Naive thymus-derived CD8-positive, alpha-beta T cell (primary cell): ENCODE measurements at regions of chr11 and their contacts with region 1.

Region 1: DNA sequence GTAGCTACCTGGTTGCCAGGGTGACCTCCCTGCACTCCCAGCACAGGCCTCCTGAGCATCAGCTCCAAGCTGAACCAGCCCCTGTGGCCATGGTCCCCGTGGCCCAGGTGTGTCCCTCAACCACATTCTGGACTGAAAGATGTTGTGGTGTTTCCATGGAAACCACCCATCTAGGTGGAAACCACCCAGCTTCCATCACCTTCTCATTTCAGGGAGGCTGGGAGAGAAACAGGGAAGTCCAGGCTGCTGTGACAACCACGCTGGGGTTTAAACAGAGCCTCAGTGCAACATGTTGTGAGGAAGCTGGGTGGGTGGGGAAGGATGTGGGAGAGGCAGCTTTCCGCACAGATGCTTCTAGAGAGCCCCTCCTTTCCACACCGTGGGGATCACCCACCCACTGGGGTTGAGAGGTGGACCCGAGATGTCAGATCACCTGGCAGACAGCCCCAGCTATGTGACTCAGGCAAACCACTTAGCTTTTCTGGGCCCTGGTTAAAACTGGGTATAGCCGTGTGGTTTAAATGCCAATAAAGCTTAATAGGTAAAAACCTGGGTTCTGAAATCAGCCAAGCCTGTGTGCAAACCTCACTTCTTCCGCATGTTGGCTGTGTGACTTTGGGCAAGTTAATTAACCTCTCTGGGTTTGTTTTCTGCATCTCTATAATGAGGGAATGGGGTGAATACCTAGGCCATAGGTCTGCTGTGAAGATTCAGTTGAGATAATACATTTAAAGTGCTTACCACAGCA is 46.4 kb downstream of the CD82 start:
- DNase-seq: peak in 9 of 10 donors; percentile 25 to 88 (median 56)
- ATAC-seq: peak; percentile 85 to 86
- H3K4me3 Mint-ChIP-seq: peak overlapping the region; percentile 24 to 61 (median 48)
- H3K27ac Mint-ChIP-seq: peak overlapping the region; percentile 34 to 91 (median 86)
- H3K4me1 Mint-ChIP-seq: peaks cover 39 to 87% (median 75%) of the 10 kb centered on the region in 4 donors
- H3K27me3 Mint-ChIP-seq: no peaks in the 10 kb centered on the region

Region 2: DNA sequence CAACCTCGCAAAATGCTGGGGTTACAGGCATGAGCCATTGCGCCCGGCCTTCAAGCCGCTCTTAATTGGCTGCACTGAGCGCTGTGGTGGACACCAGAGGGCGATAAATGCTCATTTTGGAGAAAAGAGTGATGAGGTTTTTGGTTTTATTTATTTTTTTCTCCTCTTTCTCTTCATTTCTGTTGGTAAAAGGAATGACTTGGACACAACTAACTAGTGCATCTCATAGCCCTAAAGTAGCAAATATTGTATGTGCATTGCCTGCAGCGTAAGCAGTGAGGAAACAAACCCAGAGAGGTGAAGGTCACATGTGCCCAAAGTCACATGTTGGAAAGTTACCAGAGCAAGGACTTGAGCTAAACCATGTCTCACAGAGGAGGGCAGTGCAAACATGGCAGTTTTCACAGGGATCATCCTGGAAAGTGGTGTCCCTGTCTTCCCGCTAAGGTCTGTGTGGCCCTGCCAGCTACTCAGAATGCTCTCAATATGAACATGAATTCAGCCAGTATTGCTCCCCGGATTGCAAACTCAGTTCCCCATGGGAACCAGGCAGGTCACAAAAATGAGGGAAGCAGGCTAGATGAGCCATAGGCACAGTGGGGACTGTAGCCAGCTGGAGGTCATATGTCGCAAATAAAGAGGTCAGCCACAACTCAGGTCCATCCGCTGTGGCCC is 55.0 kb before region 1 on chr11:
- POLR2A ChIA-PET with region 1: interaction called, 32 read pairs
- DNase-seq: peak; percentile 38 to 82 (median 61)
- ATAC-seq: peak; percentile 70 to 79
- H3K4me3 Mint-ChIP-seq: no peak overlapping the region
- H3K27ac Mint-ChIP-seq: peak overlapping the region in 6 of 10 donors; percentile 19 to 80 (median 70)
- H3K4me1 Mint-ChIP-seq: peaks cover 9 to 41% (median 19%) of the 10 kb centered on the region in 4 donors
- H3K27me3 Mint-ChIP-seq: peaks cover 0 to under 1% (median 0%) of the 10 kb centered on the region in 5 donors

Region 3: DNA sequence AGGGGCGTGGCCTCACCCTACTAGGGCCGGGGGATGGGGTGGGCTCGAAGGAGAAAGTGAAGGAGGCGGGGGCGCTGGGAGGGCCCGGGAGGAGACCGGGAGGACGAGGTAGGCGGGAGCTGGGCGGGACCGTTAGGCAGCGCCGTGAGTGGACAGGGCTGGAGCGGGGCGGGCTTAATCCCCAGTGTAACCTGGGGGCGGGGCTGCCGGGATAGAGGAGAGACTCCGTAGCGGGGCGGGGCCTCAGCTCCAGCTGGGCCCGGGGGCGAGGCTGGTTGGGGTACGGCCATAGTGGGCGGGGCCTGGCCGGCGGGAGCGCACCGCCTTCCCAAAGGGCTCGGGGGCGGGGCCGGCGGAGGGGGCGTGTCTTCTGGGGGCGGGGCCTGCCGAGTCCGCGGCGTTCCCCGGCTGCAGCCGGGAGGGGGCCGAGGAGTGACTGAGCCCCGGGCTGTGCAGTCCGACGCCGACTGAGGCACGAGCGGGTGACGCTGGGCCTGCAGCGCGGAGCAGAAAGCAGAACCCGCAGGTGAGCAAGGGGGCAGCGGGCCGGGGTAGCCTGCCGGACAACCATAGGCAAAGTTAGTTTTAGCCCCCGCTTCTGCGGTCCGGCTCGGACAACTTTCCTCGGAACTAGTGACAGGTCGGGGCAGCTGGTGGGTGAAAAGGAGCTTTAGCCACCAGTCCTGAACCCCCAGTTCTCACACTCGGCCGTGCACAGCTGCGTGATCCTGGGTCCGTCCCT is 46.5 kb before region 1 on chr11 and contains the start of gene CD82:
- POLR2A ChIA-PET with region 1: interaction called, 68 read pairs
- DNase-seq: peak; percentile 86 to 97 (median 92)
- ATAC-seq: peak; percentile 79 to 80
- H3K4me3 Mint-ChIP-seq: peak within 1 kb of the TSS; percentile 78 to 91 (median 87)
- H3K27ac Mint-ChIP-seq: peak within 1 kb of the TSS; percentile 80 to 91 (median 85)
- H3K4me1 Mint-ChIP-seq: peaks cover 25 to 68% (median 55%) of the 10 kb centered on the region in 4 donors
- H3K27me3 Mint-ChIP-seq: no peaks in the 10 kb centered on the region
- polyA plus RNA-seq, gene CD82: 21.1 to 29.9 (median 21.1) TPM

Region 4: GRCh38 chr11:44570411-44571155 is 41.3 kb before region 1 on chr11:
- POLR2A ChIA-PET with region 1: interaction called, 68 read pairs
- DNase-seq: peak in 1 of 10 donors; percentile 43
- ATAC-seq: no peak
- H3K4me3 Mint-ChIP-seq: peak overlapping the region in 4 of 10 donors; percentile 60 to 71 (median 64)
- H3K27ac Mint-ChIP-seq: peak overlapping the region in 5 of 10 donors; percentile 5 to 90 (median 48)
- H3K4me1 Mint-ChIP-seq: peaks cover 51 to 97% (median 91%) of the 10 kb centered on the region in 4 donors
- H3K27me3 Mint-ChIP-seq: no peaks in the 10 kb centered on the region

Region 5: GRCh38 chr11:44596525-44597276 is 15.2 kb before region 1 on chr11:
- POLR2A ChIA-PET with region 1: interaction called, 70 read pairs
- DNase-seq: peak; percentile 34 to 79 (median 56)
- ATAC-seq: peak; percentile 89 to 91
- H3K4me3 Mint-ChIP-seq: peak overlapping the region; percentile 48 to 83 (median 70)
- H3K27ac Mint-ChIP-seq: peak overlapping the region; percentile 89 to 96 (median 92)
- H3K4me1 Mint-ChIP-seq: peaks cover 20 to 55% (median 41%) of the 10 kb centered on the region in 4 donors
- H3K27me3 Mint-ChIP-seq: no peaks in the 10 kb centered on the region

Region 6: DNA sequence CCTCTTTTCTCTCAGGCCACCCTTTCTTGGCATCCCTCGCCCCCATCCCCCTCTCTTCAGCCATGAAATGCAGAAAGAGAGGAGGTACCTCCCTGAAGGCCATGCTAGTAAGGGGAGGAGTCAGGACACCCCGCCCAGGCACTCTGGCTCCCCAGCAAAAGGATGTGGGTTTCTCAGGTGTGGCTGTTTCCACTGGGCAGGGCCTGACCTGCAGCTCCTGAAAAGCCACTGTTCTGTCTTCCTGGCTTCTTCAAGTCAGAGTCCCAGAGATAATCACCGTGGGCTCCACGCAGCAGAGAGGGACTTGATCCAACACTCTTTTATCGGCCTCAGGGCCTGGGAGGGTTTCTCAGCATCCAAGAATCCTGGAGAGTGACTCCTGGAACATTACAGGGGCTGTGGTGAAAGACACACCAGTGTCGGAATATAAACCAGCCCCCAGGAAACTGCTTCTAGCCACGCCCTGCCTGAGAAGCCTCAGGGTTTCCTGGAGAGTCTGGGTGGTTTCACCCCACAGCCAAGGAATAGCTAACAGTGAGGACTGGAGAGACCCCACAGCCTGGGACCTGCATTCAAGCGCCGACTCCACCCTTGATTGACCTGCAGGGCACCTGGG is 69.2 kb after region 1 on chr11:
- POLR2A ChIA-PET with region 1: interaction called, 10 read pairs
- DNase-seq: peak in 7 of 10 donors; percentile 8 to 48 (median 14)
- ATAC-seq: peak; percentile 74 to 87
- H3K4me3 Mint-ChIP-seq: peak overlapping the region; percentile 26 to 85 (median 80)
- H3K27ac Mint-ChIP-seq: peak overlapping the region; percentile 9 to 87 (median 70)
- H3K4me1 Mint-ChIP-seq: peaks cover 24 to 48% (median 42%) of the 10 kb centered on the region in 4 donors
- H3K27me3 Mint-ChIP-seq: peaks cover 0 to 2% (median 0%) of the 10 kb centered on the region in 5 donors

Region 7: GRCh38 chr11:44893846-44894617 is 282.2 kb after region 1 on chr11:
- POLR2A ChIA-PET with region 1: no interaction called
- DNase-seq: peak in 8 of 10 donors; percentile 18 to 46 (median 34)
- ATAC-seq: peak; percentile 65
- H3K4me3 Mint-ChIP-seq: no peak overlapping the region
- H3K27ac Mint-ChIP-seq: no peak overlapping the region
- H3K4me1 Mint-ChIP-seq: no peaks in the 10 kb centered on the region
- H3K27me3 Mint-ChIP-seq: peaks cover 0 to 10% (median 0%) of the 10 kb centered on the region in 5 donors